ENCODE measurements at regions of chr11 and their contacts with region 1.

Region 1: DNA sequence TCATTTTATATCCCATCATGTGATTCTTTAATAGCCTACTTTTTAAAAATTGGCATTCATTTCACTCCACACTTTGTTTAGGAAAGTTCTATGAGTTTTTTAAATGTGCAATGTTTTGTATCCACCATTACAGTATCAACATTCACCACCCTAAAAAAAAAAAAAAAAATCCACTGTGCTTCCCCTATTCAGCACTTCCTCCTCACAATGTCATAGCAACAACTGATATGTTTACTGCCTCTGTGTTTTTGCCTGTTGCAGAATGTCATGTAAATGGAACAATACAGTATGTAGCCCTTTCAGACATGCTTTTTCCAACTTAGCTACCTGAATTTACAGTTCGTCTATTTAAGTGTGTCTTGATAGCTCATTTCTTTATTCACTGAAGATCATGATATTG is 754.2 kb downstream of the FAM181B start:
- DNase-seq: no peak
- H3K4me3 ChIP-seq: no peak overlapping the region
- H3K4me3 Mint-ChIP-seq: no peak overlapping the region
- H3K27ac ChIP-seq: no peak overlapping the region
- H3K27ac Mint-ChIP-seq: no peak overlapping the region
- H3K4me1 ChIP-seq: no peaks in the 10 kb centered on the region
- H3K4me1 Mint-ChIP-seq: no peaks in the 10 kb centered on the region
- H3K27me3 ChIP-seq: no peaks in the 10 kb centered on the region
- H3K27me3 Mint-ChIP-seq: peaks cover 0 to 2% (median 0%) of the 10 kb centered on the region in 3 donors
- CTCF ChIP-seq: no peak

Region 2: GRCh38 chr11:81915045-81915444 is 64.4 kb before region 1 on chr11:
- intact Hi-C with region 1: loop called in 1 of 2 experiments (anchors 10 kb)
- DNase-seq: no peak
- H3K4me3 ChIP-seq: no peak overlapping the region
- H3K4me3 Mint-ChIP-seq: no peak overlapping the region
- H3K27ac ChIP-seq: no peak overlapping the region
- H3K27ac Mint-ChIP-seq: no peak overlapping the region
- H3K4me1 ChIP-seq: no peaks in the 10 kb centered on the region
- H3K4me1 Mint-ChIP-seq: no peaks in the 10 kb centered on the region
- H3K27me3 ChIP-seq: no peaks in the 10 kb centered on the region
- H3K27me3 Mint-ChIP-seq: peaks cover 0 to 1% (median 0%) of the 10 kb centered on the region in 3 donors
- CTCF ChIP-seq: no peak

Region 3: GRCh38 chr11:82384308-82384707 is 404.9 kb after region 1 on chr11:
- intact Hi-C with region 1: no loop called
- DNase-seq: no peak
- H3K4me3 ChIP-seq: no peak overlapping the region
- H3K4me3 Mint-ChIP-seq: no peak overlapping the region
- H3K27ac ChIP-seq: no peak overlapping the region
- H3K27ac Mint-ChIP-seq: no peak overlapping the region
- H3K4me1 ChIP-seq: no peaks in the 10 kb centered on the region
- H3K4me1 Mint-ChIP-seq: no peaks in the 10 kb centered on the region
- H3K27me3 ChIP-seq: no peaks in the 10 kb centered on the region
- H3K27me3 Mint-ChIP-seq: peaks cover 0 to 5% (median 0%) of the 10 kb centered on the region in 3 donors
- CTCF ChIP-seq: no peak

Measured in CD14-positive monocyte (primary cell).